ENCODE measurements at regions of chr10 and their contacts with region 1.

Region 1: DNA sequence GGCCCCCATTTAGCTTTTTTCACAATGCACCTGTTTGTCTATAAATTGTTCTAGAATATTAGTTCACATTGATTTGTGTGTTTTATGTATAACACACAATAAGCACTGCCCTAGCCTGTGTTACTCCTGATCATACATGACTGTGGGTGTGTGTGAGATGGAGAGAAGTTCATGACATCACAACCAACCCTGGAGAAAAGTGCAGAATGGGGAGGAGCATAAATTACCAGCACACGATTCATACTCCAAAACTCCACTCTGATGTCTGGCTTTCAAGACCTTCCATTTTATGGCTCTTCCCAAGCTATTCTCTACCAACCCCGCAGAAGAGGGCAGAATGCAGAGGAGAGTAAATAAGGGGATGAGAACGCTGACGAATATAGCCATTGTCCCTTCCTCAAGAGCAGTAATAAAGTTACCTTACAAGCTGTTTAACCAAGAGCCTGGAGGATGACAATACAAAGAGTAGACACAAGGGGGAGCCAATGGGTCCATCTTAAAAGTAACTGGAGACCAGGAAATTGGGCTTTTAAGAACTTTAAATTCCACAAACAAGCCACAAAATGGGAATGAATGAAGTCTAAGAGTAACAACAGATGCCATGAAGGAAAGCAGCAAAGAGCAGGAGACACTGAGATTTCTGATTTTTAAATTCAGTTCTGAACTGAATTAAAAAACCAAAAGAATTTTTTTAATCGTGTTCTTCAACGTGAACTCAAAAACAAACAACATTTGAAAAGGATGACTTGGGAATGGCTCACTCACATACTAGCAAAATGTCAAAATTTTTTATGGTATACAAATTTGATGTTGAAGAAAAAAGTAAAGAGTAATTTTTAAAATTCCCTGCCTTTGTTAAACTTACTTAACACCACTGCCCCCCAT is 159.6 kb downstream of the PARD3 start:
- DNase-seq: peak; percentile 33
- H3K4me3 ChIP-seq: no peak overlapping the region
- CTCF ChIP-seq: peak; percentile 67

Region 2: DNA sequence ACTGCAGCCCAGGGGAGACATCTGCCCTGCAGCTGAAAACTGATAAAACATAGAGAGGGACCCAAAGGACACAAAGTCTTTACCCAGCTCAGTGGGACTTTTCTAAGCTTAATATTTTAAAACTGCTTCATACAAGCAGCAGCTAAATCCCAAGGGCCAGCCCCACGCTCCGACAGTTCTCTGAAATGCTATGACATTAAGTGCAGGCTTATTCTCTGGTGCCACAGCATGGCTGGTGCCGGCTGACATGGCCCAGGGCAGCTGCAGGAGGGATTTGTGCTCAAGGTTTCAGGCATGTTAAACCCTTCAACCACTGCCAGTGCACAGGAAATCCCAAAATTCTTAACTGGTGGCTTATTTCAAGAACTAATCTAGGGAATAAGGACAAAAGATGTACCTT is 11.3 kb before region 1 on chr10:
- CTCF ChIA-PET with region 1: interaction called, 42 read pairs
- POLR2A ChIA-PET with region 1: no interaction called
- DNase-seq: no peak
- H3K4me3 ChIP-seq: no peak overlapping the region
- CTCF ChIP-seq: no peak

Region 3: GRCh38 chr10:34674176-34674575 is 18.6 kb after region 1 on chr10:
- CTCF ChIA-PET with region 1: interaction called, 11 read pairs
- POLR2A ChIA-PET with region 1: no interaction called
- DNase-seq: no peak
- H3K4me3 ChIP-seq: no peak overlapping the region
- CTCF ChIP-seq: no peak

Region 4: GRCh38 chr10:34985823-34986222 is 330.3 kb after region 1 on chr10:
- CTCF ChIA-PET with region 1: interaction called, 20 read pairs
- POLR2A ChIA-PET with region 1: no interaction called
- DNase-seq: no peak
- H3K4me3 ChIP-seq: no peak overlapping the region
- CTCF ChIP-seq: peak; percentile 42

Region 5: GRCh38 chr10:35027567-35027966 is 372.0 kb after region 1 on chr10:
- CTCF ChIA-PET with region 1: interaction called, 35 read pairs
- POLR2A ChIA-PET with region 1: no interaction called
- DNase-seq: no peak
- H3K4me3 ChIP-seq: no peak overlapping the region
- CTCF ChIP-seq: peak; percentile 18

Measured in AG04449 (cell line).